B cell (primary cell): ENCODE measurements at regions of chr5 and their contacts with region 1.

Region 1: GRCh38 chr5:115124741-115125140 is 45.0 kb downstream of the TRIM36 start:
- DNase-seq: no peak
- ATAC-seq: no peak
- H3K4me3 ChIP-seq: no peak overlapping the region
- H3K4me3 Mint-ChIP-seq: no peak overlapping the region
- H3K27ac ChIP-seq: no peak overlapping the region
- H3K27ac Mint-ChIP-seq: no peak overlapping the region
- H3K4me1 ChIP-seq: no peaks in the 10 kb centered on the region
- H3K4me1 Mint-ChIP-seq: no peaks in the 10 kb centered on the region
- H3K27me3 ChIP-seq: no peaks in the 10 kb centered on the region
- H3K27me3 Mint-ChIP-seq: no peaks in the 10 kb centered on the region
- CTCF ChIP-seq: no peak

Region 2: DNA sequence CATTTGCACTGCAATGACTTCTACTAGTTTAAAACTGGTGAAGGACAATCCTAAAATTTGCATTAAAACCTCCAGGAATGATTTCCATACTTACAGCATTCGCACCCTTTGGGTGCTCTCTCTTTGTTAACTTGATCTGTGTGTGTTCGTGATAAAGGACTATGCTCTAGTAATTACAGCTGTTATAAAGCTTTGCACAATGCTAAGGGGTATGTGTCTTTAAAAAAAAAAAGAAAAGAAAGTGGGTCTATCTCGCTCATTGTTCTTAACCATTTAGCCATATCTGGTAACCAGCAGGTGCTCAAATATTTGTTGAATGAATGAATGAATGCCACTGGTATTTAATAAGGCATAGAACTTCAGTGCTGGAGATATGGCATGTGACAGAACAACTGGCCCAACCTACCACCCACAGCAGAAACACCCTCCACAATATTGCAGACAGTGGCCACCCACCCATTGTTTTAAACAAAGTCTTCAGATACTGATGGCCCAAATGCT is 36.3 kb after region 1 on chr5:
- CTCF ChIA-PET with region 1: no interaction called
- POLR2A ChIA-PET with region 1: no interaction called
- intact Hi-C with region 1: loop called (anchors 5 kb)
- DNase-seq: no peak
- ATAC-seq: no peak
- H3K4me3 ChIP-seq: no peak overlapping the region
- H3K4me3 Mint-ChIP-seq: no peak overlapping the region
- H3K27ac ChIP-seq: no peak overlapping the region
- H3K27ac Mint-ChIP-seq: no peak overlapping the region
- H3K4me1 ChIP-seq: no peaks in the 10 kb centered on the region
- H3K4me1 Mint-ChIP-seq: no peaks in the 10 kb centered on the region
- H3K27me3 ChIP-seq: peaks cover 0 to 19% (median 1%) of the 10 kb centered on the region in 4 experiments
- H3K27me3 Mint-ChIP-seq: peaks cover 40% of the 10 kb centered on the region
- CTCF ChIP-seq: no peak

Region 3: GRCh38 chr5:115487756-115488155 is 363.0 kb after region 1 on chr5:
- CTCF ChIA-PET with region 1: no interaction called
- POLR2A ChIA-PET with region 1: no interaction called
- intact Hi-C with region 1: no loop called
- DNase-seq: no peak
- ATAC-seq: no peak
- H3K4me3 ChIP-seq: no peak overlapping the region
- H3K4me3 Mint-ChIP-seq: no peak overlapping the region
- H3K27ac ChIP-seq: no peak overlapping the region
- H3K27ac Mint-ChIP-seq: no peak overlapping the region
- H3K4me1 ChIP-seq: no peaks in the 10 kb centered on the region
- H3K4me1 Mint-ChIP-seq: peaks cover 4% of the 10 kb centered on the region
- H3K27me3 ChIP-seq: peaks cover 0 to 5% (median 0%) of the 10 kb centered on the region in 4 experiments
- H3K27me3 Mint-ChIP-seq: peaks cover 4% of the 10 kb centered on the region
- CTCF ChIP-seq: no peak